Activated CD4-positive, alpha-beta T cell treated with anti-CD3 and anti-CD28 coated beads, Interleukin-2, amount 10 ng/mL, durations not matched to agents 24 days and 14 days (primary cell): ENCODE measurements at regions of chr6 and their contacts with region 1.

Region 1: GRCh38 chr6:3157131-3157927 is at the start of gene TUBB2A:
- DNase-seq: peak; percentile 97
- H3K4me3 Mint-ChIP-seq: peak within 1 kb of the TSS; percentile 86
- H3K27ac Mint-ChIP-seq: peak within 1 kb of the TSS; percentile 76
- H3K4me1 Mint-ChIP-seq: peaks cover 22% of the 10 kb centered on the region
- H3K27me3 Mint-ChIP-seq: peaks cover 40% of the 10 kb centered on the region
- total RNA-seq, gene TUBB2A: 3.9 and 4.7 TPM in 2 replicates

Region 2: DNA sequence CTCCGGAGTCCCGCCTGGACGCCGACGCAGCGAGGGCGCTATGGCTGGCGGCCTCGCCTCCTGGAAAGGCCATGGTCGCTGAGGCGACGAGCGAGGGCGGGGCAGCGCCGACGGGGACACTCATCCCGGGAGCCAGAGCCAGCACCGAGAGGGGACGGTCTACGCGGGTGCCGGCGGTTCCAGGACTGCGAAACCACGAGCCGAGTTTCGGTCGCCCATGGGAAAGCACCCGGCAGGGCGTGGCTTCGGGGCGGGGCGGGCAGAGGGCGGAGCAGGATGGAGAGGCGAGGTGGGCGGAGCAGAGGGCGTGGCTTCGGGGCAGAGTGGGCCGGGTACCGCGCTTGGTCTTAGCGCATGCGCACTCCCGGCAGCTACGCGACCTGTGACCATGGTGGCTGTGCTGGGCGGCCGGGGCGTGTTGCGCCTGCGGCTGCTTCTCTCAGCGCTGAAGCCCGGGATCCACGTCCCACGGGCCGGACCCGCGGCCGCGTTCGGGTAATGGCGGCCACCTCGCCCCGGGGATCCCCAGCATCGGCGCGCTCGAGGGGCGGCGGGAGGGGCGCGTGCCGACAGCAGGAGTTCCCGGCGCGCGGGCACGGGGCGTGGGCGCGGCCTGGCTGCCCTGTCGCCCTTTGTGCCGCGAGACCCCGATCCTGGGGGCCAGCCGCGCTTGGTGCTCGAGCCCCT is 38.8 kb before region 1 on chr6 and contains the start of gene BPHL:
- intact Hi-C with region 1: loop called (anchors 1 kb)
- DNase-seq: peak; percentile 100
- H3K4me3 Mint-ChIP-seq: peak within 1 kb of the TSS; percentile 89
- H3K27ac Mint-ChIP-seq: peak within 1 kb of the TSS; percentile 91
- H3K4me1 Mint-ChIP-seq: peaks cover 14% of the 10 kb centered on the region
- H3K27me3 Mint-ChIP-seq: peaks cover 3% of the 10 kb centered on the region
- total RNA-seq, gene BPHL: 6.8 and 7.7 TPM in 2 replicates

Region 3: GRCh38 chr6:3125815-3126214 is 31.5 kb before region 1 on chr6:
- intact Hi-C with region 1: loop called (anchors 2 kb)
- DNase-seq: no peak
- H3K4me3 Mint-ChIP-seq: no peak overlapping the region
- H3K27ac Mint-ChIP-seq: no peak overlapping the region
- H3K4me1 Mint-ChIP-seq: peaks cover 4% of the 10 kb centered on the region
- H3K27me3 Mint-ChIP-seq: no peaks in the 10 kb centered on the region

Region 4: DNA sequence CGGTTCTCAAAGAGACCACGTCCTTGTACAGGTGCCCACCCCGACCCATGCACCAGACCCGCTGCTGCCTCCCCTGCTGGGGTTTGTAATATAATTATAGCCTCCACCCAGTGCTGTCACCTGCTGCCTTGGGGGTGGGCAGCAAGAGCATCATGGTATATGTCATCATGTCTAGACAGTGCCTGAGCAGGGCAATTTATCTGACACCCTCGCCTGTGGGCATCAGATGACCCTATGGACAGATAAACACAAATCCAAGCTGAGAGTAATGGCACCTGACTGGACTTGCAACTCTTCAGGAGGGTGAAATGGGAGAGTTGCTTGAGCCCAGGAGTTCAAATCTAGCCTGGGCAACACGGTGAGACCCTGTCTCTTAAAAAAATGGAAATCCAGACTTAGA is 23.0 kb after region 1 on chr6:
- intact Hi-C with region 1: loop called (anchors 1 kb)
- DNase-seq: no peak
- H3K4me3 Mint-ChIP-seq: no peak overlapping the region
- H3K27ac Mint-ChIP-seq: no peak overlapping the region
- H3K4me1 Mint-ChIP-seq: peaks cover 2% of the 10 kb centered on the region
- H3K27me3 Mint-ChIP-seq: peaks cover 23% of the 10 kb centered on the region

Region 5: DNA sequence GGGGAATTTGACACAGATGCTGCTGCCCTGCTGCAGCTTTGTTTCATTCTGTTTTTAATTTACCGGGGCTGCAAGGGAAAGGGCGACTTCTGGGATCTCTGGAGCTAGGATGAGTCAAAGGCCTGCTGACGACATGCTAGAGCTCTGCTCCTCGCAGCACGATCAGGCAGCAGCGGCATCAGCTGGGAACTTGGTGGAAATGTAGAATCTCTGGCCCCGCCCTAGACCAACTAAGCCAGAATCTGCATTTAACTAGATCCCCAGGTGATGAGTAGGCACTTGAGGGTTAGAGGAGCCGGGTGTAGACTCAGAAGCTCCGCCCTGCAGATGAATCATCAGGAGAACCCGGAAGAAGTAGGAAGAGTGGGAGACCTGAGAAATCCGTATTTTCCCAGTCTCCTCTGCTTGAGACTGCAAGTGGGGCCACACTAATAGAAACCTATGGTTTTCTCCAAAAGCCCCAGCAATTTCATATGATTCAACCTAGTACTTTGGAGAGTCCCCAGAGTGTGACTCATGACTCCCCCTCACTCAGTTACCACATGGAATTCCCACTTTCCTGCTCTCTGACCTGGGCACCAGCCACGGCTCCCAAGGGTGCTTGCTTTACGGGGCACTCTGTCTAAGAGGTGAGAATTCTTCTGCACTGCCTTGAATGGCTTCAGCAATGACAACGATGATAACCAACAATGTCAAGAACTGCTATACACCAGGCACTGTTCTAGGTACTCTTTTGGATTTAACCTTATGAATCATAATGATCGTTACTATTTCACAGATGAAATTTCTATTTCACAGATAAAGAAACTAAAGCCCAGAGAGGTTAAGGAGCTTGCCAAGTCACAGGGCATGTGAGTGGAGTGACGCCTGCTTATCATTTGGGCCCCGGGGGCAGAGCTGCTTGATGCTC is 52.0 kb after region 1 on chr6:
- intact Hi-C with region 1: loop called (anchors 1 kb)
- DNase-seq: peak; percentile 70
- H3K4me3 Mint-ChIP-seq: peak overlapping the region; percentile 46
- H3K27ac Mint-ChIP-seq: peak overlapping the region; percentile 94
- H3K4me1 Mint-ChIP-seq: peaks cover 25% of the 10 kb centered on the region
- H3K27me3 Mint-ChIP-seq: peaks cover 26% of the 10 kb centered on the region

Region 6: GRCh38 chr6:3419624-3420272 is 262.4 kb after region 1 on chr6:
- intact Hi-C with region 1: no loop called
- DNase-seq: no peak
- H3K4me3 Mint-ChIP-seq: no peak overlapping the region
- H3K27ac Mint-ChIP-seq: no peak overlapping the region
- H3K4me1 Mint-ChIP-seq: peaks cover under 1% of the 10 kb centered on the region
- H3K27me3 Mint-ChIP-seq: peaks cover 19% of the 10 kb centered on the region